ENCODE measurements at regions of chrX and their contacts with region 1.

Region 1: DNA sequence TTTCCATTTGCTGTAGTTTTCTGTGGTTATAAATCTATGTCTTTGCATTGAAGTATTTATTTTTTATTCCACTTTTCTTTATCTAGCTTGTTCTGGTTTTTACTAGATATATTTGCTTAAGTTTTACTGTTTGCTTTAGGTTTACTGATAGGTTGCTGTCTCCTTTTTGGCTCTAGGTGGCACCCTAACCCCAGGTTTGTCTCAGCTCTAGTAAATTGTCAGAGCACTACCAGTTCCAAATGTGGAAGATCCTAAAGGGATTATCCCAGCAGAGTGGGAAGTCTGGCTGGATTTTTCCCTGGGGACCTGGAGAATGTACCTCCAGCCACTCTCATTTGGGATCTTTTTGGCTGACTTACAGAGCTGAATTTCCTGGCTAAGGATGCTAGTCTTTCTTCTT is 106.1 kb downstream of the PBDC1 start:
- DNase-seq: peak; percentile 6 to 58
- ATAC-seq: peak; percentile 76 to 89; a peak in 5 of 6 replicates
- H3K4me3 ChIP-seq: no peak overlapping the region
- H3K27ac ChIP-seq: no peak overlapping the region
- H3K4me1 ChIP-seq: no peaks in the 10 kb centered on the region
- CTCF ChIP-seq: peak; percentile 71
- EP300 ChIP-seq: no peak
- POLR2A ChIP-seq: no peak
- RAD21 ChIP-seq: peak; percentile 77 to 83

Region 2: DNA sequence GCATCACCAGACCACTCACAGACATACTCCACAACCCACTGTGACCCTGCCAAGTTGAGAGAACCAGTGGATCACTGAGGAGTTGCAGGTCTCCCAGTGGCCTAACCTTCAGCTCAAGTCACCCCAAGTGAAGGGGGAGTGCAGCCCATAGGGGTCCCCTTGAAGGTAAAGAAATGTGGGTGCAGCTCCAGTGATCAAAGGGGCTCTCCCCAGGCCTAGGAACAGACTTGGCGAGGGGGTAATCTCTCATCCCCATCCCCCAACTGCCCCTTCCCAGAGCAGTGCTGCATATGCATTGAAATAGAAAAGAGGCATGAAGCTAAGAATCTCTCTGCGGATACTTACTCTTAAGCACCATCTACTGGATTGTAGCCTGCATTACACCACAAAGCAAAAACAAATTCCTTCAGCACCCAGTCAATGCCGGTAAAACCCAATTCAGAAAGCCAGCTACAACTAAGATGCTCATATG is 175.5 kb after region 1 on chrX:
- CTCF ChIA-PET with region 1: interaction called, 18 read pairs
- POLR2A ChIA-PET with region 1: no interaction called
- DNase-seq: peak in 1 of 2 experiments; percentile 23
- ATAC-seq: peak in 1 of 2 experiments; percentile 73; a peak in 3 of 6 replicates
- H3K4me3 ChIP-seq: no peak overlapping the region
- H3K27ac ChIP-seq: no peak overlapping the region
- H3K4me1 ChIP-seq: no peaks in the 10 kb centered on the region
- CTCF ChIP-seq: peak; percentile 31; the same call in 1 of the 3 replicates
- EP300 ChIP-seq: no peak
- POLR2A ChIP-seq: no peak
- RAD21 ChIP-seq: peak; percentile 28 to 48; a peak in 3 of 5 replicates

Measured in A549 (cell line).